PC-9 (cell line): ENCODE measurements at regions of chr11 and their contacts with region 1.

Region 1: DNA sequence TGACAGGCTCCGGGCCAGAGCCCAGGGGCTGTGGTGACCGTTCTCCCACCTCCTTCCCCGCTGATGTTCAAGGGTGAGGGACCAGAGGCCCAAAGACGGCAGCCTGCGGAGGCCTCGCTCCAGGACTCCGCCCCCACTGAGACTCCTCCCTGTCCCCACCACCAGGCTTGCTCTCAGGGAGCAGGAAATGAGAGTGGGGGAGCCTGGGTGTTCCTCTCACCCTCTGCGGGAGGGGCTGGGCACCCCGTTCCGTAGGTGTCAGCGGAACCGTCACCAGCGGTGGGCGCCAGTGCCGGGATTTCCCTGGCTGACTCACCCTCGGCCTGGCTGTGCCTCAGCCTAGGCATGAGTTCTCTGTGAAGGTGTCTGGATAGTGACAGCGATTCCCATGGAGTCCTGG is 15.7 kb downstream of the DAGLA start:
- DNase-seq: peak; percentile 91 to 94
- H3K4me3 ChIP-seq: peak overlapping the region; percentile 34; the same call in 1 of the 2 replicates
- H3K27ac ChIP-seq: peak overlapping the region; percentile 96
- H3K4me1 ChIP-seq: peaks cover 73% of the 10 kb centered on the region
- H3K27me3 ChIP-seq: no peaks in the 10 kb centered on the region
- CTCF ChIP-seq: no peak

Region 2: DNA sequence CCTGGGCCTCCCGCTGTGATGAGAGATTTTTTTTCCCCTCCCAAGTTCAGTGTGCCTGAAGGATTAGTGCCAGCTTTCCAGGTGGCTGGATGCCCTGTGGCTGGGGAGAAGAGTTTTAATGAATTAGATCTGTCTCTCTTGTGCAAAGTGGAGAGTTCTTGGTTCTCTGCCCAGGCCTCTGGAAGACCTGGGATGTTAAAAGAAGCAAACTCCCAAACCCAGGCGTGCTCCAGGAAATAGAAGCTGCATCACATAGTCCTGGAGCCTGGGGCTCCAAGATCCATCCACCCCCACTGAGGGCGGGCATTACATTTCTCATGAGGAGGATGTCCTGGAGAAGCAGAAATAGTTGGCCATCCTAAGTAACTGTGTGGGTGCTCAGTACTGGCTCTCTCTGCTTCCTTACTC is 235.4 kb before region 1 on chr11:
- CTCF ChIA-PET with region 1: no interaction called
- POLR2A ChIA-PET with region 1: no interaction called
- intact Hi-C with region 1: no loop called
- DNase-seq: no peak
- H3K4me3 ChIP-seq: no peak overlapping the region
- H3K27ac ChIP-seq: no peak overlapping the region
- H3K4me1 ChIP-seq: no peaks in the 10 kb centered on the region
- H3K27me3 ChIP-seq: no peaks in the 10 kb centered on the region
- CTCF ChIP-seq: no peak

Region 3: GRCh38 chr11:61489833-61490721 is 205.8 kb before region 1 on chr11:
- CTCF ChIA-PET with region 1: no interaction called
- POLR2A ChIA-PET with region 1: no interaction called
- intact Hi-C with region 1: no loop called
- DNase-seq: peak in 1 of 2 experiments; percentile 75
- H3K4me3 ChIP-seq: no peak overlapping the region
- H3K27ac ChIP-seq: peak overlapping the region; percentile 88
- H3K4me1 ChIP-seq: peaks cover 53% of the 10 kb centered on the region
- H3K27me3 ChIP-seq: no peaks in the 10 kb centered on the region
- CTCF ChIP-seq: no peak

Region 4: GRCh38 chr11:61679893-61680621 is 15.9 kb before region 1 on chr11 and contains the start of gene DAGLA:
- CTCF ChIA-PET with region 1: interaction called, 5 read pairs
- POLR2A ChIA-PET with region 1: no interaction called
- intact Hi-C with region 1: loop called (anchors 1 kb)
- DNase-seq: peak; percentile 48 to 75
- H3K4me3 ChIP-seq: peak within 1 kb of the TSS; percentile 72
- H3K27ac ChIP-seq: no peak within 1 kb of the TSS
- H3K4me1 ChIP-seq: peaks cover 14% of the 10 kb centered on the region; the same call in 1 of the 2 replicates
- H3K27me3 ChIP-seq: peaks cover 22% of the 10 kb centered on the region
- CTCF ChIP-seq: peak; percentile 93
- total RNA-seq, gene DAGLA: 8.3 and 10.1 TPM in 2 replicates

Region 5: GRCh38 chr11:62816557-62816956 is 1120.6 kb after region 1 on chr11:
- CTCF ChIA-PET with region 1: no interaction called
- POLR2A ChIA-PET with region 1: no interaction called
- intact Hi-C with region 1: no loop called
- DNase-seq: no peak
- H3K4me3 ChIP-seq: no peak overlapping the region
- H3K27ac ChIP-seq: no peak overlapping the region
- H3K4me1 ChIP-seq: no peaks in the 10 kb centered on the region
- H3K27me3 ChIP-seq: no peaks in the 10 kb centered on the region
- CTCF ChIP-seq: no peak